Activated CD4-positive, alpha-beta memory T cell treated with anti-CD3 and anti-CD28 coated beads for 36 hours (primary cell): ENCODE measurements at regions of chr19 and their contacts with region 1.

Region 1: GRCh38 chr19:16185123-16185767 is at the start of gene FAM32A:
- DNase-seq: peak; percentile 100
- H3K4me3 Mint-ChIP-seq: peak within 1 kb of the TSS; percentile 98
- H3K27ac Mint-ChIP-seq: peak within 1 kb of the TSS; percentile 94
- H3K4me1 Mint-ChIP-seq: peaks cover 28% of the 10 kb centered on the region
- H3K27me3 Mint-ChIP-seq: peaks cover 4% of the 10 kb centered on the region
- total RNA-seq, gene FAM32A: 43.8 to 44.3 TPM

Region 2: DNA sequence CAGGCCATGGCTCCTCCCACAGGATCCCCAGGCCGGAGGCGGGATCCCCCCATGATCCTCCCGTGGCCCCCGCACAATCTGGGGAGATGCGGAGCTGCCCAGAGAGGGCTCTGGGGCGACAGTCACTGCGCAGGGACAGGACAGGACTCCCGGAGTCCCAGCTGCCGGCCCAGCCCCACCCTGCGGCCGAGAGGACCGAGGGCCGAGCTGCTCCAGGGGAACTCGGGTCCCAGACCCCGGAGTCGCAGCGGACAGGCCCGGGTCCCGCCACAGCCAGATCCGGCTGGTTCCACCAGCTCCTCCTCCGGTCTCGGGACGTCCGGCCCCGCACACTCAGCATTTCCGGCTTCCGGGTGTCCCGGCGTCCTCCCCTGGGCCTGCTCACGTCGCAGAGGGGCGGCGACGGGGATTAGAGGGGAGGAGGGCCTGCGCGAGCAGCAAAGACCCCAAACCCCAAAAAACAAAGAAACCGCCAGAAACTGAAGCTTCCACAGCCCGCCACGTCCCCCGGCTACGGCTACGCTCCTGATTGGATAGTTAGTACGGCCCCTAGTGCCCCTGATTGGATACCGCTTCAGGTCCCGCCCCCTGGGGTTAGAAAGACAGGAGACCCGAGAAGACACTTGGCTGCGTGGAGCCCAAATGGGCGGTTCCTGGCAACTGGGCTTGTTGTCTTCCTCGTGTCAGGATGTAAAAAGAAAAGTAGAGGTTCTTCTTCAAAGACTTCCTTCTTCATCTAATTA is 348.5 kb before region 1 on chr19:
- CTCF ChIA-PET with region 1: no interaction called
- POLR2A ChIA-PET with region 1: interaction called, 3 read pairs
- intact Hi-C with region 1: loop called (anchors 10 kb)
- DNase-seq: peak; percentile 97
- H3K4me3 Mint-ChIP-seq: peak overlapping the region; percentile 83
- H3K27ac Mint-ChIP-seq: peak overlapping the region; percentile 95
- H3K4me1 Mint-ChIP-seq: peaks cover 21% of the 10 kb centered on the region
- H3K27me3 Mint-ChIP-seq: no peaks in the 10 kb centered on the region

Region 3: DNA sequence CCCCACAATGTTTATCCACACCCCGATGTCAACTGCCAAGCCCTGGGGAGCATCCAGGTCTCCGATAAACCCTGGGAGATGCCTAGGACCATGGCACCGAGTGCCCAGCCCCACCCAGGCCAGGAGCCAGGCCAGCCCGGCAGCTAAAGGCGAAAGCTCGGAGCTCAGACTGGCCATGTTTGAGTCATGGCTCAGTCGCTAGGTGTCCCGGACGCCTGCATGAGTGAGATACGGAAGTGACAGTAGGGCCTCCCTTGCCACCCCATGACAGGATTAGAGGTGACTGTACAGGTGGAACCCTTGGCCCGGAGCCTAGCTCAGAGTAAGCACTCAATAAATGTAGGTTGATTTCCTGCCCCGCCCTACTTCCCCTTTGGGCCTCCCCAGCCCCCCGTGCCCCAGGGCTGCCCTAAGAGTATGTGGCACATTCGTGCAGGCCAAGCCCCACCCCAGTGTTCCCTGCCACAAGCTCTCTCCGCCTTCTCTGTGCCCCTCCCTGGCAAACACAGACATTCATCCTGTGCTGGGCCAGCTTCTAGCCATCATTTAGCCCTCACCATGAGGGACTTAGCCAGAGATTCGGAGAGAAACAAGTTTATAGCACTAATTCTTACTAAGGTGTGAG is 114.8 kb before region 1 on chr19:
- CTCF ChIA-PET with region 1: interaction called, 18 read pairs
- POLR2A ChIA-PET with region 1: interaction called, 3 read pairs
- intact Hi-C with region 1: loop called (anchors 1 kb)
- DNase-seq: peak; percentile 94
- H3K4me3 Mint-ChIP-seq: no peak overlapping the region
- H3K27ac Mint-ChIP-seq: no peak overlapping the region
- H3K4me1 Mint-ChIP-seq: peaks cover 43% of the 10 kb centered on the region
- H3K27me3 Mint-ChIP-seq: no peaks in the 10 kb centered on the region

Region 4: GRCh38 chr19:16118489-16119033 is 66.7 kb before region 1 on chr19:
- CTCF ChIA-PET with region 1: interaction called, 4 read pairs
- POLR2A ChIA-PET with region 1: interaction called, 4 read pairs
- intact Hi-C with region 1: loop called (anchors 2 kb)
- DNase-seq: peak; percentile 84
- H3K4me3 Mint-ChIP-seq: peak overlapping the region; percentile 55
- H3K27ac Mint-ChIP-seq: peak overlapping the region; percentile 97
- H3K4me1 Mint-ChIP-seq: peaks cover 79% of the 10 kb centered on the region
- H3K27me3 Mint-ChIP-seq: no peaks in the 10 kb centered on the region